Ascending aorta (tissue), 2 donors: ENCODE measurements at regions of chr5 and their contacts with region 1.

Region 1: DNA sequence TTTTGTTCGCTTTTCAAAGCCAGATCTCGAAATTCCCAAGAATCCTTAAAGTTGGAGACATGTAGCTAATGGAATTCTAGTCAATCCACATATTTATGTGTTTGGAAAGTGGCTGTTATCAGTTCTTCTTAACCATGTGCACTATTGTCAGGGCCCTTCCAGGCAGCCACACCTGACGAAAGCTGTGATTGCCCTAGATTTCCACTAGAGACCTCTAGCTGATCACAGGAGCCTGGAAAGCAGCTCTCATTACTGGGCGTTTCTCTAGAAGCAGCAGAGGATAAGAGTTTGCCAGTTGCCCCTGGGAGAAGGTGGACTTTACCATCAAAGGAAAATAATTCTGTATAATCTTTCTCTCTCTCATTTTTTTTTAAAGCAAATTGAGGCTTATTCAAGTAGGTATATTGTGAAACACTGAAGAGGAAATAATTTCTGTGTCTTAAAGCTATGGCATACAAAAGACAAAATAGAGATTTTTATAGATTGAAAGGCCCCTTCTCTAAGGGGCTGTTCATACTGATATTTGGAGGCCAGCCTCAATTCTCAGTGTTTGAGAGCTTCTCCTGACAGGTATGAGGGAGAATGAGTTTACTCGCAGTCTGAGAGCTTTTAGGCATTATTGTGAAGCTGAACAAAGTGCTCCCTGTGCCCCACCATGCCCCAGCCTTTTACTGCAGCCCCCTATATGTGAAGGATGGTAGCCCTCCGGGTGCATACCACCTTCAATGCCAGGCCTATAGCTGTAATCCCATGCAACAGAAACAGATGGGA is 405.4 kb upstream of the ACTBL2 start:
- DNase-seq: peak in 1 of 2 donors; percentile 65
- H3K4me3 ChIP-seq: no peak overlapping the region
- H3K27ac ChIP-seq: no peak overlapping the region
- H3K4me1 ChIP-seq: no peaks in the 10 kb centered on the region
- H3K27me3 ChIP-seq: no peaks in the 10 kb centered on the region
- CTCF ChIP-seq: peak; percentile 35 to 75 (median 61)

Region 2: GRCh38 chr5:57779383-57780223 is 108.4 kb before region 1 on chr5:
- intact Hi-C with region 1: loop called (anchors 5 kb)
- DNase-seq: no peak
- H3K4me3 ChIP-seq: peak overlapping the region in 1 of 2 donors; percentile 35
- H3K27ac ChIP-seq: peak overlapping the region in 1 of 2 donors; percentile 11
- H3K4me1 ChIP-seq: peaks cover 6% of the 10 kb centered on the region in 2 donors
- H3K27me3 ChIP-seq: no peaks in the 10 kb centered on the region
- CTCF ChIP-seq: peak; percentile 35 to 62 (median 50)